ENCODE measurements at regions of chr16 and their contacts with region 1.

Region 1: DNA sequence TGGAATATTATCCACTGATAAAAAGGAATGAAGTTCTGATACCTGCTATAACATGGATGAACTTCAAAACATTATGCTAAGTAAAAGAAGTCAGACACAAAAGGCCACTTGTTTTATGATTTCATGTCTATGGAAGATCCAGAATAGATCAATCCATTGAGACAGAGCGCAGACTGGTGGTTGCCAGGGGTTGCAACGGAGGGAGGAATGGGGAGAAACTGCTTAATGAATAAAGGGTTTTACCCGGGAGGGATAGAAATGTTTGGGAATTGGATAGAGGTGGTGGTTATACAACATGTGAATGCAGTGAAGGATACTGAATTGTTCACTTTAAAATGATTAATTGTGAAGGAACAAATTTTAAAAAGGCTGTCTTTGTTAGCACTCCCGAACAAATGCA is 30.2 kb downstream of the WDR59 start:
- DNase-seq: no peak
- H3K4me3 Mint-ChIP-seq: no peak overlapping the region
- H3K27ac Mint-ChIP-seq: no peak overlapping the region
- H3K4me1 Mint-ChIP-seq: peaks cover 3% of the 10 kb centered on the region
- H3K27me3 Mint-ChIP-seq: no peaks in the 10 kb centered on the region

Region 2: DNA sequence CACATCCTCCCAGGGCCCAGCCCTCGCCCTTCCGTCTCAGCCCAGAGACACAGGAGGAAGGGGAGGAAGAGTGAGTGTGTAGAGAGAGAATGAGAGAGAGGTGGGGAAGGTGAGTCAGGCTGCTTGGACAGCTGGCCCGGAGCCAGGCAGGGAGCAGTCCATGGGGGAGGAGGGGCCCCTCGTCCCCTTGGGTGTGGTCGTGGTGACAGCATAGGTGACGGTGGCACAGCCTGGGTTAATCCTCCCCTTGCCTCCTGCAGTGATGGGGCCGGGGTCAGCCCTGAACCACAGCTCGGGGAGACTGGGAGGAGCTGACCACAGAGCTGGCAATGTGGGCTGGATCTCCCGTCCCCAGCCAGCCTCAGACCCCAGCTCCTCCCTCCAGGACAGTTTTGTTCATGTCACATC is 216.6 kb before region 1 on chr16:
- CTCF ChIA-PET with region 1: no interaction called
- POLR2A ChIA-PET with region 1: no interaction called
- intact Hi-C with region 1: loop called (anchors 10 kb)
- DNase-seq: no peak
- H3K4me3 Mint-ChIP-seq: no peak overlapping the region
- H3K27ac Mint-ChIP-seq: no peak overlapping the region
- H3K4me1 Mint-ChIP-seq: no peaks in the 10 kb centered on the region
- H3K27me3 Mint-ChIP-seq: peaks cover 4% of the 10 kb centered on the region

Region 3: GRCh38 chr16:75029557-75030253 is 74.9 kb after region 1 on chr16:
- CTCF ChIA-PET with region 1: no interaction called
- POLR2A ChIA-PET with region 1: no interaction called
- intact Hi-C with region 1: no loop called
- DNase-seq: no peak
- H3K4me3 Mint-ChIP-seq: no peak overlapping the region
- H3K27ac Mint-ChIP-seq: no peak overlapping the region
- H3K4me1 Mint-ChIP-seq: peaks cover 5% of the 10 kb centered on the region
- H3K27me3 Mint-ChIP-seq: no peaks in the 10 kb centered on the region